Activated CD8-positive, alpha-beta T cell treated with anti-CD3 and anti-CD28 coated beads, Interleukin-2, amount 10 ng/mL, durations not matched to agents 7 days and 5 days (primary cell): ENCODE measurements at regions of chr1 and their contacts with region 1.

Region 1: GRCh38 chr1:53860967-53861411 is 22.9 kb upstream of the NDC1 start:
- DNase-seq: peak; percentile 59
- ATAC-seq: peak; percentile 95
- H3K4me3 Mint-ChIP-seq: no peak overlapping the region
- H3K27ac Mint-ChIP-seq: no peak overlapping the region
- H3K4me1 Mint-ChIP-seq: no peaks in the 10 kb centered on the region
- H3K27me3 Mint-ChIP-seq: no peaks in the 10 kb centered on the region

Region 2: DNA sequence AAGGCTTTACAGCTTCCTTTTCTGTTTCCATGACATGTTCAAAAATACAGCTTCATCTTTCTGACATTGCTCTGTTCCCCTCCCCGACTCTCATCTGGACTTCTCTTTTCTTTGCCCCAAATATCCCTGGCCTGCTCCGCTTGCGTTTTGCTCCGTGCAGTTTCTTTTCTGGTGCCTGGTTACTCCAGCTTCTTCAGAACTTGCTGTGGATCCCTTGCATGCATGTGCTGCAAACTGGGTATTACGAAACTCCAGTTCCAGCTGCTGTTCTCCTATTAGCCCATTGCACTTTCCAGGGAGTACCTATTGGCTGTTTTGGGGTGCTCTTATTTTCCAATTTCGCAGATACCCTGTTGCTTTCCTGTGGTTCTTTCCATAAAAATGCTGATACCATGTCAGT is 13.0 kb before region 1 on chr1:
- CTCF ChIA-PET with region 1: interaction called, 22 read pairs
- POLR2A ChIA-PET with region 1: no interaction called
- DNase-seq: no peak
- ATAC-seq: no peak
- H3K4me3 Mint-ChIP-seq: no peak overlapping the region
- H3K27ac Mint-ChIP-seq: no peak overlapping the region
- H3K4me1 Mint-ChIP-seq: no peaks in the 10 kb centered on the region
- H3K27me3 Mint-ChIP-seq: peaks cover 2% of the 10 kb centered on the region

Region 3: DNA sequence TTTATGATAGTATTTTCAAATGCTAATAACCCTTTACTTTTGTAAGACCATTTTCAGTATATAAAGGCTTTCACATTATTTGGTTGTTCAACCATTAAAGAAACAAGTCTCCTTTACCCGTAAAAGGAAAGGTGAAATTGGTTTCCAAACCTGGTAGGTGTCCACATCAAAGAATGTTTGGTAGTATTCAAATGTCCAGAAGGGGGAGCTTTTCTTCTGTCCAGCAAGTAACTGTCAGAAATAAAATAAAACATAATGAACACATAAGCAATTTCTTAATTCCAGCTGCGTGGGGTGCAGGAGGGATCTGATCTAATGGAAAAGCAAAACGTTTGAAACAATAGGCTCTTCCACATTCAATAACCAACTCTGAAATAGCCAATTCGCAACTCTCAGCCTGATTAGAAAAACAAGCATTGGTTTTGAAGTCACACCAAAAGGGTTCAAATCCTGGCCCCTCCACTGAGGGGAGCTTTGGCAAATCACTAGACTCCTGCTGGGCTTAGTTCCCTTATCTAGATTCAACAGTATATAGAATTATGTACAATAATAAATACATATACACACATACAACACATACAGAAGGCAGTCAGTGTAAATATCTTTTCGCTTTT is 17.6 kb after region 1 on chr1:
- CTCF ChIA-PET with region 1: interaction called, 14 read pairs
- POLR2A ChIA-PET with region 1: no interaction called
- DNase-seq: no peak
- ATAC-seq: no peak
- H3K4me3 Mint-ChIP-seq: no peak overlapping the region
- H3K27ac Mint-ChIP-seq: no peak overlapping the region
- H3K4me1 Mint-ChIP-seq: no peaks in the 10 kb centered on the region
- H3K27me3 Mint-ChIP-seq: no peaks in the 10 kb centered on the region

Region 4: DNA sequence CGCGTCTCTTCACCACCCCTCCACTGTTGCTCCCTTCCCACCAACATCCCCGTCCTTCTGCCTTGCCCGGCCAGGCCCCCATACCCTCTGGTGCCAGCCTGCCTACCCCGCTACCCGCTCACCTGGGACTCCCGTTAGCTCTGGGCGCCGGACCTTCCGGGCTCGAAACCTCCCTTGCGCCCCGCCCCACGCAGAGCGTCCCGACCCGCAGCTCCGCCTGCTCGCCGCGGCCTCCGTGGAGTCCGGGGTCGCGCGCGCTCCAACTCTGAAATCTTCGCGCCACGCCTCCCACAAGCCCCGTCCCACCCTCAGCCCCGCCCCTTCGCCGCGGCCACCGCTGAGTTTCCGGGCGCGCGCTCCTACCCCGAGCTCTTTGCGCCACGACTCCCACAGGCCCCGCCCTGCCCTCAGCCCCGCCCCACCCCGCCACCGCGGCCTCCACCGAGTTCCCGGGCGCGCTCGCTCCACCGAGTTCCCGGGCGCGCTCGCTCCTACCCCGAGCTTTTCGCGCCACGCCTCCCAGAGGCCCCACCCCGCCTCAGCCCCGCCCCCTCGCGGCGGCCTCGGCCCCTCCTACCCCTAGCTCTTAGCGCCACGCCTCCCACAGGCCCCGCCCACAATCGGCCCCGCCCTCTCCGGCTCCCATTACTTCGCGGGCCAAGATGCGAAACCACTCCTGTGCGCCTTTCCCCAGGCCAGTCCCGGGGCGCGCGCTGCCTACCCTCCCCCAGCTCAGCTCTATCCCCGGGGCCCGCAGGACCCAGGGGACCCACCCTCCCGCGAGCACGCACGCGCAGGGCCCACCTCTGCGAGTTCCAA is 84.7 kb after region 1 on chr1 and contains the start of gene IFT25:
- CTCF ChIA-PET with region 1: interaction called, 179 read pairs
- POLR2A ChIA-PET with region 1: interaction called, 3 read pairs
- DNase-seq: peak; percentile 98
- ATAC-seq: peak; percentile 83
- H3K4me3 Mint-ChIP-seq: peak within 1 kb of the TSS; percentile 98
- H3K27ac Mint-ChIP-seq: peak within 1 kb of the TSS; percentile 97
- H3K4me1 Mint-ChIP-seq: peaks cover 48% of the 10 kb centered on the region
- H3K27me3 Mint-ChIP-seq: no peaks in the 10 kb centered on the region
- total RNA-seq, gene IFT25: 83.1 to 87.1 TPM

Region 5: DNA sequence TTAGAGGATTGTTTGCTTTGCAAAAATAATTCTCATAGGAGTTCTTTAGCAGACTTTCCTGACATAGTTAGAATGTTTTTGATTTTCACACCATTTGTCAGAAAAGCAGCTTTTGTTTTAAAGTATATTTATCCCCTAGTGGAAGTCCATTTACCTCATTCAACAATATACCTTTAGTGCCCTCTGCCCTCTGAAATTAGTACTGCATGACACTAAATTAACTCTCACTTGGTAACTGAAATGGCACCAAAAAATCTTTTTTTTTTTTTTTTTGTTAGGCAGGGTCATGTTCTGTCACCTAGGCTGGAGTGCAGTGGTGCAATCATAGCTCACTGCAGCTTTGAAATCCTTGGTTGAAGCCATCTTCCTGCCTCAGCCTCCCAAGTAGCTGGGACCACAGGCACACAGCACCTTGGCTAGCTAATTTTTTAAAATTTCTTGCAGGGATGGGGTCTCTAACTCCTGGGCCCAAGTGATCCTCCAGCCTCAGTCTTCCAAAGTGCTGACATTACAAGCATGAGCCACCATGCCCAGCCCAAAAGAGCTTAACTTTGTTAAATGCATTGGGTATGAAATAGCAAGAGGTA is 98.8 kb after region 1 on chr1:
- CTCF ChIA-PET with region 1: interaction called, 179 read pairs
- POLR2A ChIA-PET with region 1: no interaction called
- DNase-seq: peak; percentile 44
- ATAC-seq: no peak
- H3K4me3 Mint-ChIP-seq: no peak overlapping the region
- H3K27ac Mint-ChIP-seq: no peak overlapping the region
- H3K4me1 Mint-ChIP-seq: peaks cover 15% of the 10 kb centered on the region
- H3K27me3 Mint-ChIP-seq: no peaks in the 10 kb centered on the region

Region 6: GRCh38 chr1:53971718-53972117 is 110.7 kb after region 1 on chr1:
- CTCF ChIA-PET with region 1: interaction called, 16 read pairs
- POLR2A ChIA-PET with region 1: no interaction called
- DNase-seq: no peak
- ATAC-seq: no peak
- H3K4me3 Mint-ChIP-seq: no peak overlapping the region
- H3K27ac Mint-ChIP-seq: no peak overlapping the region
- H3K4me1 Mint-ChIP-seq: peaks cover 6% of the 10 kb centered on the region
- H3K27me3 Mint-ChIP-seq: no peaks in the 10 kb centered on the region

Region 7: GRCh38 chr1:54081306-54082270 is 220.6 kb after region 1 on chr1:
- CTCF ChIA-PET with region 1: interaction called, 10 read pairs
- POLR2A ChIA-PET with region 1: no interaction called
- DNase-seq: peak; percentile 74
- ATAC-seq: peak; percentile 94
- H3K4me3 Mint-ChIP-seq: no peak overlapping the region
- H3K27ac Mint-ChIP-seq: no peak overlapping the region
- H3K4me1 Mint-ChIP-seq: peaks cover 8% of the 10 kb centered on the region
- H3K27me3 Mint-ChIP-seq: no peaks in the 10 kb centered on the region